Activated CD4-positive, alpha-beta memory T cell treated with anti-CD3 and anti-CD28 coated beads, Interleukin-2, amount 10 ng/mL, durations not matched to agents 7 days and 5 days (primary cell): ENCODE measurements at regions of chr10 and their contacts with region 1.

Region 1: GRCh38 chr10:72126184-72126871 is 38.0 kb upstream of the SPOCK2 start:
- DNase-seq: no peak
- H3K4me3 Mint-ChIP-seq: no peak overlapping the region
- H3K27ac Mint-ChIP-seq: no peak overlapping the region
- H3K4me1 Mint-ChIP-seq: peaks cover 28% of the 10 kb centered on the region
- H3K27me3 Mint-ChIP-seq: no peaks in the 10 kb centered on the region

Region 2: GRCh38 chr10:71795248-71795647 is 331.1 kb before region 1 on chr10:
- CTCF ChIA-PET with region 1: no interaction called
- POLR2A ChIA-PET with region 1: no interaction called
- DNase-seq: no peak
- H3K4me3 Mint-ChIP-seq: no peak overlapping the region
- H3K27ac Mint-ChIP-seq: no peak overlapping the region
- H3K4me1 Mint-ChIP-seq: peaks cover 12% of the 10 kb centered on the region
- H3K27me3 Mint-ChIP-seq: no peaks in the 10 kb centered on the region

Region 3: DNA sequence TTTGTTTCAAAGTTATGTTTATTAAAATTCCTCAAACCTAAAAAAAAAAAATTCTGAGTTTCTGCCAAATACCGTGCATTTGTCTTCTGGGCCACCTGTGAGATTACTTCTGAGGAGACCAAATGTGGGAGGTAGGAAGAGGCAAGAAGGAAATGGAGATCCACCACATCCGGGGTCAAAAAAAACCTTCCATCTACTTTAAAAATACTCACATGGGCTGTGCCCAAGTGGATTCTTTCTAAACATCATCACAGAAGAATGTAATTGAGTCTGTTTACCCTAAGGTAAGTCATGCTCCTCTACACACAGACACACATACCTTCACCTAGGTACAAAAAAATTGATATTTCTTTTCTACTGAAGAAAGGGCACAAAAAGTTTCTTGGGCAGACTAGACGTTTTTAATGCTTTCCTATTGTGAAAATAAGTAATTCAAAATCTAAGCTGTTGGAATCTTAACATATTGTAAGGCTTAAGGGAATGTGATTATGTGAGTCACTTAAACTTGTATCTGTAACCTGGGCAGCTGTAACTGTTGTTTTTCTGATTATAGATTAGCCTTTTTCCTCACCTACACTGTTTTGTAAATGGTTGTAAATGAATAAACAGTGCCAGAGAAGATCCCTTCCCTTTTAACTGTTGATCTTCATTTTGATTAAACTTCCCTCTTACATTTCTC is 18.9 kb before region 1 on chr10:
- CTCF ChIA-PET with region 1: interaction called, 14 read pairs
- POLR2A ChIA-PET with region 1: interaction called, 5 read pairs
- DNase-seq: no peak
- H3K4me3 Mint-ChIP-seq: peak overlapping the region; percentile 79
- H3K27ac Mint-ChIP-seq: peak overlapping the region; percentile 95
- H3K4me1 Mint-ChIP-seq: peaks cover 61% of the 10 kb centered on the region
- H3K27me3 Mint-ChIP-seq: no peaks in the 10 kb centered on the region

Region 4: DNA sequence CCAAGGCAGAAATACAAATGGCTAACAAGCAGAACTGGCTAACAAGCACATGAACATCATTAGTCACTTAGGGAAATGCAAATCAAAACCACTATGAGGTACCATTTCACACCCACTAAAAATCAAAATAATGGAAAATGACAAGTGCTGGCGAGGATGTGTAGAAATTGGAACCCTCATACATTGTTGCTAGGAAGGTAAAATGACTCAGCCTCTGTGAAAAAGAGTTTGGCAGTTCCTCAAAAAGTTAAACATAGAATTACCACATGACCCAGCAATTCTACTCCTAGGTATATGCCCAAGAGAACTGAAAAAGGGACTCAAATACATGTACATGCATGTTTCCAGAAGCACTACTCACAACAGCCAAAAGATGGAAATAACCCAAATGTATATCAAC is 36.6 kb after region 1 on chr10:
- CTCF ChIA-PET with region 1: no interaction called
- POLR2A ChIA-PET with region 1: no interaction called
- DNase-seq: no peak
- H3K4me3 Mint-ChIP-seq: no peak overlapping the region
- H3K27ac Mint-ChIP-seq: peak overlapping the region; percentile 11
- H3K4me1 Mint-ChIP-seq: peaks cover 16% of the 10 kb centered on the region
- H3K27me3 Mint-ChIP-seq: no peaks in the 10 kb centered on the region

Region 5: GRCh38 chr10:72223743-72224101 is 97.4 kb after region 1 on chr10:
- CTCF ChIA-PET with region 1: interaction called, 16 read pairs
- POLR2A ChIA-PET with region 1: no interaction called
- DNase-seq: no peak
- H3K4me3 Mint-ChIP-seq: no peak overlapping the region
- H3K27ac Mint-ChIP-seq: peak overlapping the region; percentile 58
- H3K4me1 Mint-ChIP-seq: peaks cover 52% of the 10 kb centered on the region
- H3K27me3 Mint-ChIP-seq: no peaks in the 10 kb centered on the region